Ovary (tissue), 10 donors: ENCODE measurements at regions of chr15 and their contacts with region 1.

Region 1: GRCh38 chr15:72272213-72273002 is at the start of gene PARP6:
- DNase-seq: peak; percentile 98 to 99 (median 99)
- H3K4me3 ChIP-seq: peak within 1 kb of the TSS; percentile 76
- H3K27ac ChIP-seq: peak within 1 kb of the TSS; percentile 92 to 96
- H3K4me1 ChIP-seq: peaks cover 6% of the 10 kb centered on the region
- H3K27me3 ChIP-seq: no peaks in the 10 kb centered on the region
- CTCF ChIP-seq: peak; percentile 61 to 82 (median 78)
- EP300 ChIP-seq: no peak
- POLR2A ChIP-seq: no peak
- total RNA-seq, gene PARP6: 44.5 to 97.4 (median 70.0) TPM

Region 2: GRCh38 chr15:72117486-72118399 is 154.7 kb before region 1 on chr15 and contains the start of gene MYO9A:
- intact Hi-C with region 1: no loop called
- DNase-seq: peak; percentile 98 to 99 (median 98)
- H3K4me3 ChIP-seq: peak within 1 kb of the TSS; percentile 52
- H3K27ac ChIP-seq: peak within 1 kb of the TSS; percentile 77 to 92
- H3K4me1 ChIP-seq: peaks cover 2% of the 10 kb centered on the region
- H3K27me3 ChIP-seq: no peaks in the 10 kb centered on the region
- CTCF ChIP-seq: peak in 2 of 3 donors; percentile 13 to 16
- EP300 ChIP-seq: no peak
- POLR2A ChIP-seq: peak; percentile 29
- total RNA-seq, gene MYO9A: 38.0 to 71.6 (median 58.8) TPM

Region 3: GRCh38 chr15:72231066-72231846 is 41.2 kb before region 1 on chr15 and contains the start of gene PKM:
- intact Hi-C with region 1: loop called in 2 of 4 experiments (anchors 2 to 5 kb)
- DNase-seq: peak; percentile 93 to 97 (median 94)
- H3K4me3 ChIP-seq: peak within 1 kb of the TSS; percentile 88
- H3K27ac ChIP-seq: peak within 1 kb of the TSS; percentile 90 to 99
- H3K4me1 ChIP-seq: peaks cover 18% of the 10 kb centered on the region
- H3K27me3 ChIP-seq: no peaks in the 10 kb centered on the region
- CTCF ChIP-seq: no peak
- EP300 ChIP-seq: no peak
- POLR2A ChIP-seq: peak; percentile 88
- total RNA-seq, gene PKM: 128 to 385 (median 291) TPM

Region 4: GRCh38 chr15:72473614-72474465 is 201.4 kb after region 1 on chr15 and contains the start of gene ARIH1:
- intact Hi-C with region 1: loop called in 1 of 4 experiments (anchors 5 kb)
- DNase-seq: peak; percentile 97 to 99 (median 99)
- H3K4me3 ChIP-seq: peak within 1 kb of the TSS; percentile 88
- H3K27ac ChIP-seq: peak within 1 kb of the TSS; percentile 99 to 100
- H3K4me1 ChIP-seq: peaks cover 11% of the 10 kb centered on the region
- H3K27me3 ChIP-seq: no peaks in the 10 kb centered on the region
- CTCF ChIP-seq: peak in 2 of 3 donors; percentile 7 to 23
- EP300 ChIP-seq: peak; percentile 59
- POLR2A ChIP-seq: peak; percentile 100
- total RNA-seq, gene ARIH1: 47.9 to 211 (median 171) TPM